Testis (tissue), 5 donors: ENCODE measurements at regions of chr7 and their contacts with region 1.

Region 1: GRCh38 chr7:16078076-16078952 is 343.0 kb downstream of the CRPPA start:
- DNase-seq: peak; percentile 35
- H3K4me3 ChIP-seq: no peak overlapping the region
- H3K27ac ChIP-seq: no peak overlapping the region
- H3K4me1 ChIP-seq: no peaks in the 10 kb centered on the region
- H3K27me3 ChIP-seq: no peaks in the 10 kb centered on the region
- CTCF ChIP-seq: peak; percentile 47 to 66 (median 61)
- POLR2A ChIP-seq: no peak

Region 2: DNA sequence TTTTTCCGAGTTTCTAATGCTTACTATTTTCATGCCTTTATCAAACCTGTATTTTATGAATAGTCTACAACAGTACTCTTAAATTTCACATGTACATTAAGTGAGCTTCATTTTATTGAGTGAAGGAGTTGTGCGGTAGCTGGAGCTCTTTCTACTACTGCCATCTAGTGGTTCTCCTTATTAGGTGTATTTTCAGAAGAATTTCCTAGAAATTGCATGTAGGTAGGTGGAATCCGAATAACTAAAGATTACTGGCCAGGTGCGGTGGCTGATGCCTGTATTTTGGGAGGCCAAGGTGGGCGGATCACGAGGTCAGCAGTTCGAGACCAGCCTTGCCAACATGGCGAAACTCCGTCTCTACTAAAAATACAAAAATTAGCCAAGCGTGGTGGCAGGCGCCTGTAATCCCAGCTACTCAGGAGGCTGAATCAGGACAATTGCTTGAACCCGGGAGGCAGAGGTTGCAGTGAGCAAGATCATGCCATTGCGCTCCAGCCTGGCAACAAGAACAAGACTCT is 486.7 kb after region 1 on chr7:
- intact Hi-C with region 1: loop called (anchors 5 kb)
- DNase-seq: no peak
- H3K4me3 ChIP-seq: no peak overlapping the region
- H3K27ac ChIP-seq: no peak overlapping the region
- H3K4me1 ChIP-seq: no peaks in the 10 kb centered on the region
- H3K27me3 ChIP-seq: no peaks in the 10 kb centered on the region
- CTCF ChIP-seq: peak; percentile 54 to 68 (median 55)
- POLR2A ChIP-seq: no peak